Left lung (tissue), 14 donors: ENCODE measurements at regions of chr7 and their contacts with region 1.

Region 1: GRCh38 chr7:14717816-14718215 is 184.7 kb downstream of the DGKB start:
- DNase-seq: peak in 2 of 4 donors; percentile 16 to 19
- ATAC-seq: peak; percentile 74
- H3K4me3 ChIP-seq: no peak overlapping the region
- H3K27ac ChIP-seq: no peak overlapping the region
- H3K4me1 ChIP-seq: no peaks in the 10 kb centered on the region
- H3K27me3 ChIP-seq: no peaks in the 10 kb centered on the region
- CTCF ChIP-seq: peak in 1 of 2 donors; percentile 30

Region 2: DNA sequence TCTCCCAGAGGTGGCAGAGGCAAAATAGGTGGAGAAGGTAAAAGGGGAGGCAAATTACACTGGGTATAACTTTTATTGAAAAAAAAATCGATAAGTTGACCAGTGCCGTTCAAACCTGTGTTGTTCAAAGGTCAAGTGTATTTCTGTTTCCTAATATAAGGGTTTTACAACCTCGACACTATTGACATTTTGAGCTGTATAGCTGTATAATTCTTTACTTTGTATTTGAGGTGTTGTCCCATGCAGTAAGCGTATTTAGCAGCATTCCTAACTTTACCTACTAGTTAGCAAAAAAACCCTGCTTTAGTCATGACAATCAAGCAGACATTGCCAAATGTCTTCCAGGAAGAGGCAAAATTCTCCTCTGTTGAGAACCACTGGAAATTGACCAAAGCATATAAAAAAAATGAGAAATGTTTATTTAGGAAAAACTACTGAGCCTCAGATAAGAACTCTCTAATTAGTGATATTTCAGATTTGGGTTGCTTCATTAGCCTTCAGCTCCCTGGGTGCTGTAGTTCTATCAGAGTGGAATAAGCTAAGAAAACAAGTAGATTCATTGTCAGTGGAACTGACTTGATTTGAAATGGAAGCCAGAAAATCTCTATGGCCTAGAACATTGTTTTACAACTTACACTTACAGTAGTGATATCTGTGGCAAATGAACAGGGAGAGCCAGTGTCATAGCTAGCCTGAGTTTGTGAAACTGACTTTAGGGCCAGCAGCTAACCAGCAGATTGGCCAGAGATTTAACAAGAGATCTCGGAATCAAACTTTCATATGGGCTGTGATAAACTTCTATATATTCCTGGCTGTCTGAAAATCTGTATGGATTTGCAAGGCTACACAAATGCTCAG is 146.8 kb before region 1 on chr7:
- intact Hi-C with region 1: no loop called
- DNase-seq: no peak
- ATAC-seq: no peak
- H3K4me3 ChIP-seq: no peak overlapping the region
- H3K27ac ChIP-seq: no peak overlapping the region
- H3K4me1 ChIP-seq: no peaks in the 10 kb centered on the region
- H3K27me3 ChIP-seq: no peaks in the 10 kb centered on the region
- CTCF ChIP-seq: no peak

Region 3: GRCh38 chr7:15015545-15016326 is 297.9 kb after region 1 on chr7:
- intact Hi-C with region 1: loop called in 1 of 2 experiments (anchors 10 kb)
- DNase-seq: peak in 2 of 4 donors; percentile 45 to 68
- ATAC-seq: peak; percentile 99
- H3K4me3 ChIP-seq: no peak overlapping the region
- H3K27ac ChIP-seq: no peak overlapping the region
- H3K4me1 ChIP-seq: no peaks in the 10 kb centered on the region
- H3K27me3 ChIP-seq: no peaks in the 10 kb centered on the region
- CTCF ChIP-seq: peak in 1 of 2 donors; percentile 50